ENCODE measurements at regions of chr12 and their contacts with region 1.

Region 1: GRCh38 chr12:6335451-6336078 is 6.3 kb downstream of the TNFRSF1A start:
- DNase-seq: peak in 2 of 4 donors; percentile 87 to 93
- ATAC-seq: peak; percentile 40
- H3K4me3 ChIP-seq: peak overlapping the region; percentile 24 to 100
- H3K27ac ChIP-seq: peak overlapping the region; percentile 97 to 99
- H3K4me1 ChIP-seq: peaks cover 55 to 91% of the 10 kb centered on the region in 2 donors
- H3K27me3 ChIP-seq: no peaks in the 10 kb centered on the region
- CTCF ChIP-seq: no peak

Region 2: GRCh38 chr12:5996459-5996858 is 339.1 kb before region 1 on chr12:
- intact Hi-C with region 1: no loop called
- DNase-seq: no peak
- ATAC-seq: no peak
- H3K4me3 ChIP-seq: no peak overlapping the region
- H3K27ac ChIP-seq: no peak overlapping the region
- H3K4me1 ChIP-seq: no peaks in the 10 kb centered on the region
- H3K27me3 ChIP-seq: peaks cover 5 to 6% of the 10 kb centered on the region in 2 donors
- CTCF ChIP-seq: no peak

Region 3: GRCh38 chr12:6376079-6376869 is 40.7 kb after region 1 on chr12:
- intact Hi-C with region 1: loop called in 1 of 2 experiments (anchors 5 kb)
- DNase-seq: peak in 2 of 4 donors; percentile 78 to 89
- ATAC-seq: peak; percentile 50
- H3K4me3 ChIP-seq: peak overlapping the region in 1 of 2 donors; percentile 48
- H3K27ac ChIP-seq: peak overlapping the region; percentile 81 to 87
- H3K4me1 ChIP-seq: peaks cover 46 to 75% of the 10 kb centered on the region in 2 donors
- H3K27me3 ChIP-seq: no peaks in the 10 kb centered on the region
- CTCF ChIP-seq: peak; percentile 32 to 36

Measured in left lung (tissue), 14 donors.